ENCODE measurements at regions of chr22 and their contacts with region 1.

Region 1: GRCh38 chr22:19730655-19731360 is 7.5 kb downstream of the GP1BB start:
- DNase-seq: peak; percentile 88
- ATAC-seq: peak; percentile 92
- H3K4me3 Mint-ChIP-seq: peak overlapping the region; percentile 66
- H3K27ac Mint-ChIP-seq: no peak overlapping the region
- H3K4me1 Mint-ChIP-seq: peaks cover 2% of the 10 kb centered on the region
- H3K27me3 Mint-ChIP-seq: peaks cover 1% of the 10 kb centered on the region
- CTCF ChIP-seq: peak; percentile 99

Region 2: DNA sequence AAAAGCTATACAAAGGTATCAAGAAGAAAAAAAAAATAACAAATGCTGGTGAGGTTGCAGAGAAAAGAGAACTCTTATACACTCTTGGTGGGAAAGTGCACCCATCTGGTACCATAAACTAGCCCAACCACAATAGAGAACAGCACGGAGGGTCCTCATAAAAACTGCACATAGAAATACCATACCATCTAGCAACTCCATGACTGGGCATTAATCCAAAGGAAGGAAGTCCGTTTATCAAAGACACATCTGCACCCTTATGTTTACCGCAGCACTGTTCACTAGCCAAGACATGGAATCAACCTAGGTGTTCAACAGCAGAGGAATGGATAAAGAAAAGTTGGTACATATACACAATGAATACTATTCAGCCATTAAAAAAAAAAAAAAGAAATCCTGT is 195.8 kb before region 1 on chr22:
- CTCF ChIA-PET with region 1: no interaction called
- POLR2A ChIA-PET with region 1: no interaction called
- intact Hi-C with region 1: no loop called
- DNase-seq: no peak
- ATAC-seq: no peak
- H3K4me3 Mint-ChIP-seq: no peak overlapping the region
- H3K27ac Mint-ChIP-seq: no peak overlapping the region
- H3K4me1 Mint-ChIP-seq: no peaks in the 10 kb centered on the region
- H3K27me3 Mint-ChIP-seq: peaks cover 2% of the 10 kb centered on the region
- CTCF ChIP-seq: no peak

Region 3: DNA sequence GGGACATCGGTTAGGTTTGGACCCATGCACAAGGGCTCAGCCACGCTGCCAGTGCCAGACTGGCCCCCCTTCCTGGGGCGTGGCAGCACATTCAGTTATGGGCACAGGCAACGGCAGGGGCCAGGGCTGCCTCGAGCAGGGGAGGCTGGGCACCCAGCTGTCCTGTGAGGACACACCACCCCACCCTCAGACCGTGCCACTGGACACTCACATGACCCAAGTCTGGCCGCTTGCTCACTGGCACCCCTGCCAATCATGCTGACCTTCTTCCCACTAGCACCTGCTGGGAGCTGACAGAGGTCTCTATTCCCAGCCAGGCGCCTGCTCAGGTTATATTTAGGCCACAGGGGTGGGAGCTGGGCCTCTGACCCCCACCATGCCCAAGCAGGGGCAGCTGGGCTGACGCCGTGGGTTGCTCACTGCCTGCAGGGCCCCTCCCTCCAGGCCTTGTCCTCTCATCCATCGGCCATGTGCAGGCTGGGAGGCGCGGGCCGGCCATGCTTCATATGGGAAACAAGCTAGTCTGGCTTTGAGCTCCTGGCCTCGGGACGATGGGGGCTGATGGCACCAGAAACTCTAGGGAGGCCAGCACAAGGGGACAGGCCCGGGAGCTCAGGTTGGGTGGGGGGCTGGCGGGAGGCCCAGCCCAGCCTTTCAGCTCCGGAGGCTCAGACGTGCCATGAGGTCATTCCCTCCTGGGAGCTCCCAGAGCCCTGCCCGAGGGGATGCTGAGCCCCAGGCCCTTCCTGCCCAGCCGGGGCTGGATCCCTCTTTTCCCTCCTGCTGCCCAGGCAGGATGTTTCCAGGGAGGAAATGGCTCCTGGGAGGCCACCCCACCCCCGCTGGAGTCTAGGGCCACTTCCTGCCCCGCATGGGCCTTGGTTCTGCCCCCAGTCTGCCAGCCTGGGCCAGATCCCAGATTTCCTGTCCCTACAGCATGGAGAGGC is 14.6 kb after region 1 on chr22:
- CTCF ChIA-PET with region 1: interaction called, 25 read pairs
- POLR2A ChIA-PET with region 1: no interaction called
- intact Hi-C with region 1: no loop called
- DNase-seq: no peak
- ATAC-seq: no peak
- H3K4me3 Mint-ChIP-seq: no peak overlapping the region
- H3K27ac Mint-ChIP-seq: no peak overlapping the region
- H3K4me1 Mint-ChIP-seq: no peaks in the 10 kb centered on the region
- H3K27me3 Mint-ChIP-seq: no peaks in the 10 kb centered on the region
- CTCF ChIP-seq: no peak

Region 4: DNA sequence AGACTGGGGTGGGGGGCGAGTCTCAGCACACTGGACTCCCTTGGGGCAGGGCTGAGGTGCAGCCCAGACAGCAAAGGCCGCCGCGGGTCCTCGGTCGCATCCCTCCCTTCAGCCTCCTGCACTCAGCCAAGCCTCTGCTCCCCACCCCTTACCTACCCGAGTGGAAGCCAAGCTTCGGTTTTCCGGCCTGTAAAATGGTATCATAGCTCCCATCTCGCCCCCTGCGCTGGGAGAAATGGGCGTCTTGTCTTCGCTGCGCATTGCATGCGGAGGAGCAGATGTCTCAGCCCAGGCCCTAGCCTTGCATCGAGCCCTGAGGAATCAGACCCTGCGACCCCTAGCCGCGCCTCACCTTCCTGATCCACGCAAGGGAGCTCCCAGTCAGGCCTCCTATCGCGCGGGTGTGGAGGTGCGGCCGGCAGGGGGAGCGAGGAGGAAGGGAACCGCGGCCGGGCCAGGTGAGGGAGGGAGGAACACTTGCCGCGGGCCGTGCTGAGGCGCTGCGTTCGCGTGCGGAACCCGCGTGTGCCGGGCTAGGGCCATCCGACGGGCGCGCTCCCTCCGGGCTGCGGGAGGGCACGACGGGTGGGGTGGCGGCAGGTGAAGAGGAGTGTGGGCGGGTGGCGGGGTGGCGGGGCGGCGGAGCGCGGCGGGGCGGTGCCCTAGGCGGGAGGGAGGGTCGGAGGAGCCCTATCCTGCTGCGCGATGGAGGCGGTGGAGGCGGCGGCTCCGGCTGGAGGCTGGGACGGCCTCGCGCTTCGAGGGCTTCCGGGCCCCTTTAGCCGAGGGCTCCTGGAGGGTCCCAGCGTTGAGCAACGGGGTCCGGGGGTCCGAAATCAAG is 25.7 kb after region 1 on chr22:
- CTCF ChIA-PET with region 1: interaction called, 17 read pairs
- POLR2A ChIA-PET with region 1: no interaction called
- intact Hi-C with region 1: no loop called
- DNase-seq: peak; percentile 71
- ATAC-seq: peak; percentile 68
- H3K4me3 Mint-ChIP-seq: no peak overlapping the region
- H3K27ac Mint-ChIP-seq: no peak overlapping the region
- H3K4me1 Mint-ChIP-seq: peaks cover 25% of the 10 kb centered on the region
- H3K27me3 Mint-ChIP-seq: peaks cover 52% of the 10 kb centered on the region
- CTCF ChIP-seq: peak; percentile 68

Region 5: DNA sequence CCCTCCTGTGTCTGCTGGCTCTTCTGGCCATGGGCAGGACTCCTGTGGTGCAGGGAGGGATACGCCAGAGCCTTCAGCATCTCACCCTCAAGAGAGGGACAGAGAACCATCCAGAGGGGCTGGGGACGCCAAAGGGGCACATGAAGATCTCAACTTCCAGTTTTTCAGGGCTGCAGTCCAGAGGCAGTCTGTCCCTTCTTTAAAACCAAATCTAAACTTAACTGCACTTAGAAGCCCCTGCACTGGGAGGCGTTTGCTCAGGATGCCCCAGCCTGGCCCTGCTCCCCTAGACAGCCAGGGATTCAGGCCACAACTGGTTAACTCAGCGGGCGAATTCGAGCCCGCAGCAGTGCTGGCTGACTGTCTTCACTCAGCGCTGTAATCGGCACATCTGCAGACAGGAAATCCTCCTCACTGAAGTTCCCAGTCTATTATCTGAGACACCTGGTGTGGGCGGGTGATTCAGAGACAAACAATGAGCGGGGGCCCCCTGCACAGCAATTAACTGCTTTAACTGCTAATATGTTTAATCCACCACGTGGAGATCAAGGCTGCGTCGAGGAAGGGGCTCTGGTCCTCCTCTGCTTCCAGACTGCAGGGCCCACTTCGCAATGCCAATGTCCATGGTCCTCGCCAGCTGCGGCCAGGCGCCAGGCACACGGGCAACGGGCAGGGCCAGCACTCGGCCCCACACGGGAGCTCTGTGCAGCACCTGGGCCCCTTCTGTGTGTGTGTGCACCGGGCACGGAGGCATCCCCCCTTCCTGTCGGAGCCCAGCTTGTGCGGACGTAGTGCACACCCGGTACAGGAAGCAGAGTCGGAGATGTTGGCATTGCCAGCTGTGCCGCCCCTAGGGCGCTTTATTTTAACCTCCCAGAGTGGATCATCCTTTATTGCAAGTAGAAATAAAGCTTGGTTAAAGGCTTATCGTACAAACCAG is 160.8 kb after region 1 on chr22:
- CTCF ChIA-PET with region 1: interaction called, 26 read pairs
- POLR2A ChIA-PET with region 1: interaction called, 7 read pairs
- intact Hi-C with region 1: no loop called
- DNase-seq: peak; percentile 96
- ATAC-seq: peak; percentile 74
- H3K4me3 Mint-ChIP-seq: peak overlapping the region; percentile 73
- H3K27ac Mint-ChIP-seq: peak overlapping the region; percentile 97
- H3K4me1 Mint-ChIP-seq: peaks cover 81% of the 10 kb centered on the region
- H3K27me3 Mint-ChIP-seq: no peaks in the 10 kb centered on the region
- CTCF ChIP-seq: no peak

Region 6: GRCh38 chr22:19902245-19902715 is 171.5 kb after region 1 on chr22:
- CTCF ChIA-PET with region 1: interaction called, 21 read pairs
- POLR2A ChIA-PET with region 1: no interaction called
- intact Hi-C with region 1: no loop called
- DNase-seq: no peak
- ATAC-seq: no peak
- H3K4me3 Mint-ChIP-seq: no peak overlapping the region
- H3K27ac Mint-ChIP-seq: no peak overlapping the region
- H3K4me1 Mint-ChIP-seq: peaks cover 2% of the 10 kb centered on the region
- H3K27me3 Mint-ChIP-seq: no peaks in the 10 kb centered on the region
- CTCF ChIP-seq: no peak

Region 7: DNA sequence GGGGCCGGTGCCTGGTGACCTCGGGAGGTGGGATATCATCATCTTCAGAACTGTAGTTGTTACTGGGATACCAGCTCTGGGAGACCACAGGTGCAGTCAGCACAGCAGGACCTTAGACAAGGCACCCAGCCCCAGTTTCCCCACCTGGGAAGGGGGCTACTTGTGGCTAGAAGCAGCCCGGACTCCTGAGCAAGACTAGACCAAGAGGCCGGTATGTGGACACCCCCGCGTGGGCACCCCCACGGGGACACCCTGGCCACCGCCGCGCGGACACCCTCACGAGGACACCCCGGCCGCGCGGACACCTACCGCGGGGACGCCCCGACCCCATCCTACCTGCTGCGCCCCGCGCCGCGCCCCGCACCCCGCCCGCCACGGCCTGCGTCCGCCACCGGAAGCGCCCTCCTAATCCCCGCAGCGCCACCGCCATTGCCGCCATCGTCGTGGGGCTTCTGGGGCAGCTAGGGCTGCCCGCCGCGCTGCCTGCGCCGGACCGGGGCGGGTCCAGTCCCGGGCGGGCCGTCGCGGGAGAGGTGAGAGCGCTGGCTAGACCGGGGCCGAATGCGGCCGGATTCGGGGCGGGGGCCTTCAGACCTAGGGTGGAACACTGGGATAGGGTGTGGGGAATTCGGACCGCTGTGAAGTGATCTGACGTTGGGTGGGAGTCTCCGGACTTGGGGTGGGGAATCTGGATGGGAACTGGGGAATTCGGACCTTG is 210.7 kb after region 1 on chr22 and contains the starts of genes COMT and TXNRD2:
- CTCF ChIA-PET with region 1: interaction called, 13 read pairs
- POLR2A ChIA-PET with region 1: interaction called, 3 read pairs
- intact Hi-C with region 1: no loop called
- DNase-seq: peak; percentile 82
- ATAC-seq: peak; percentile 89
- H3K4me3 Mint-ChIP-seq: peak within 1 kb of the TSS; percentile 97
- H3K27ac Mint-ChIP-seq: peak within 1 kb of the TSS; percentile 96
- H3K4me1 Mint-ChIP-seq: peaks cover 34% of the 10 kb centered on the region
- H3K27me3 Mint-ChIP-seq: no peaks in the 10 kb centered on the region
- CTCF ChIP-seq: no peak
- total RNA-seq, gene COMT: 70.7 to 74.5 TPM
- total RNA-seq, gene TXNRD2: 18.0 to 18.5 TPM